Activated naive CD4-positive, alpha-beta T cell treated with anti-CD3 and anti-CD28 coated beads for 36 hours (primary cell): ENCODE measurements at regions of chr17 and their contacts with region 1.

Region 1: DNA sequence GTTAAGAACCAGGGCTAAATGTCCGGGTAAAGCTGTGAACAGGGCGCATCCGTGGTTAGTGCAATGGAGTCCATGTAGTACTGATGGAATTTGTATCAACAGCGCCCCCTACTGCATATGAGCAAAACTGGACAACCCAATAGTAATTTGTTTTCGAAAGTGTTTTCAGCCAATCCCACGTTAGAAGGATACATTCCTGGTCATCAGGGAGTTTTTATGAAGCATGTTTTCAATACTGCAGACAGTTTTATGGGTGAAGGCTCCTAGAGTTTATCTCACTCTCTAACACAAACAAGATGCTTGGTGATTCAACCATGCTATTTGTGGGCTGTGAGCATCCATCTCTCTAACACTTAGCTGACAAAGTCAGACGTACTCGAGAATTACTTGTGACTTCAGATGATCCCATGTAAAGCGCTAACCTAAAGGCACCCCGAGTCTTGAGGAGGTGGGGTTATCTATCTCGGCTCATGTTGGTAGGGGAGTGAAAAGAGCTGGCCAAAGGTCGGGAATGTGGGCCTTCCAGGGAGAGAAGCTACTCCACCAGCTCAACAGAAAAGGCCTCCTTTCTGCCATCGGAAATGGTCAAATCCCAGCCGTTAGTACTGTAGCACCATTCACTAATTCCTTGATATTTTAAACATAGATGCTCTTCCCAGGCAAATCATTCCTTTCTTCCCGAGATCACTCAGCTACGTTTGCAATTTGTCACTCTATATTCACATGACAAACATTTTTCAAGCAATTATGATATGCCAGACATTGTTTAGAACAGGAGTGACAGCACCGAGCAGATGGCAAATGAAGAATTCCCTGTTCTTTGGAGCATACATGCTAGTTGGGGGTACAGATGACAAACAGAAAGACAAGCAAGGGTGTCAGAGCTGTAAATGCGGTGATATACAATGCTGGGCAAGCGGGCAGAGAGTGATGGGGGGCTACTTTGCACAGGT is 46.9 kb upstream of the HNF1B start:
- DNase-seq: peak; percentile 78
- H3K4me3 Mint-ChIP-seq: no peak overlapping the region
- H3K27ac Mint-ChIP-seq: no peak overlapping the region
- H3K4me1 Mint-ChIP-seq: no peaks in the 10 kb centered on the region
- H3K27me3 Mint-ChIP-seq: peaks cover 14% of the 10 kb centered on the region

Region 2: DNA sequence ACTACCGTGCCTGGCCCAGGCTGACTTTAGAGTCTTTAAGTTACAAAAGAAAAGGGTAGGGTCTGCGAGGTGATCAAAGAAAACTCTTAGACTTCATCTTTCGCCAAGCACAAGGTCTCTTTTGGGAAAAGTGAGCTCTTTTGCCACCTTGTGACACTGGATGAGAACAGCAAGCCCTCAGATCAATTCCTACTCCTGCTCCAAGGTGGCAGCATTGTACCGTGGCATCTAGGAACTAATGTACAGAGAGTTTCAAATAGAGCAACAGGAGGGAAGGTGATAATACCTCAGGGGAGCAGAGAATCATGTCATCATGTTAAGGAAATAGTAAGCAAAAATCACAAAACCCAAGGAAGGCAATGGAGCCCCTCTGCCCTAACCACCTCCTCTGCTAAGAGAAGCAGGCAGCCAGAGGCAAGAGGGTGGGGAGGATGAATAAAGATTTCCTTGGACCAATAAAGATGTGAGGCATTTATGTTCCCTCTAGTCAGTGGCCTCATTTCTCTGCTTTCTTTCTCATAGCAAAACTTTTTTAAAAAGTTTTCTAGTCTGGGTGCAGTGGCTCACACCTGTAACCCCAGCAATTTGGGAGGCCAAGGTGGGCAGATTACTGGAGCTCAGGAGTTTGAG is 418.1 kb before region 1 on chr17:
- CTCF ChIA-PET with region 1: no interaction called
- intact Hi-C with region 1: loop called (anchors 1 kb)
- DNase-seq: peak; percentile 89
- H3K4me3 Mint-ChIP-seq: no peak overlapping the region
- H3K27ac Mint-ChIP-seq: no peak overlapping the region
- H3K4me1 Mint-ChIP-seq: peaks cover 7% of the 10 kb centered on the region
- H3K27me3 Mint-ChIP-seq: no peaks in the 10 kb centered on the region

Region 3: GRCh38 chr17:37527249-37527851 is 264.4 kb before region 1 on chr17:
- CTCF ChIA-PET with region 1: interaction called, 14 read pairs
- intact Hi-C with region 1: loop called (anchors 1 kb)
- DNase-seq: peak; percentile 44
- H3K4me3 Mint-ChIP-seq: no peak overlapping the region
- H3K27ac Mint-ChIP-seq: no peak overlapping the region
- H3K4me1 Mint-ChIP-seq: peaks cover 7% of the 10 kb centered on the region
- H3K27me3 Mint-ChIP-seq: no peaks in the 10 kb centered on the region

Region 4: GRCh38 chr17:37576281-37576680 is 215.4 kb before region 1 on chr17:
- CTCF ChIA-PET with region 1: no interaction called
- intact Hi-C with region 1: no loop called
- DNase-seq: no peak
- H3K4me3 Mint-ChIP-seq: no peak overlapping the region
- H3K27ac Mint-ChIP-seq: no peak overlapping the region
- H3K4me1 Mint-ChIP-seq: no peaks in the 10 kb centered on the region
- H3K27me3 Mint-ChIP-seq: no peaks in the 10 kb centered on the region

Region 5: DNA sequence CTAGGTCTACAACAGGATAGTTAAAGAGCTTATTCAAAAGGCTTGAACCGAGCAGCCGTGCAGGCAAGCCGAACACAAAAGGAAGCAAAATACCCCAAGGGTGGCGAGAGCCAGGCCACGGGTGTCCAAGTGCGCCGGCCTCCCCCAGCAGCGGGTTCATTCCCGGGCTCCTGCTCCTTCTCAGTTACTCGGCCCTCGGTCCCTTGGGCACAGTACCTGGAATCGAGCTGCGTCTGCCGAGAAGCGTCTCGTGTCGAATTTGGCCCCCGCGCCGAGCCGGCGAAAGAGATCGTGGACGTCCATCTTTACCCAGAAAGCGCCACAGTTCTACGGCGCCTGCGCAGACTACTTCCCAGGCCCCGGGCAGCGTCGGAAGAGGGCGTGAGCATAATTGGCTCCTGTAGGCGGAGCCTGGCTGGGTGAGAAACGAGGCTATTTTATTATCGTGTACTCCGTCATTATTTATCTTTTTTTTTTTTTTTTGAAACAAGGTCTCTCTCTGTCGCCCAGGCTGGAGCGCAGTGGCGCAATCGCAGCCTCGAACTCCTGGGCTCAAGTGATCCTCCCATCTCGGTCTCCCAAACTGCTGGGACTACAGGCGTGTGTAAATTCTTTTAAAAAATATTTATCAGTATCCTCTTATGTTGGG is 148.5 kb before region 1 on chr17 and contains the start of gene DDX52:
- CTCF ChIA-PET with region 1: no interaction called
- intact Hi-C with region 1: loop called (anchors 1 kb)
- DNase-seq: peak; percentile 93
- H3K4me3 Mint-ChIP-seq: peak within 1 kb of the TSS; percentile 87
- H3K27ac Mint-ChIP-seq: peak within 1 kb of the TSS; percentile 81
- H3K4me1 Mint-ChIP-seq: peaks cover 23% of the 10 kb centered on the region
- H3K27me3 Mint-ChIP-seq: peaks cover 13% of the 10 kb centered on the region
- total RNA-seq, gene DDX52: 18.5 to 20.2 TPM

Region 6: DNA sequence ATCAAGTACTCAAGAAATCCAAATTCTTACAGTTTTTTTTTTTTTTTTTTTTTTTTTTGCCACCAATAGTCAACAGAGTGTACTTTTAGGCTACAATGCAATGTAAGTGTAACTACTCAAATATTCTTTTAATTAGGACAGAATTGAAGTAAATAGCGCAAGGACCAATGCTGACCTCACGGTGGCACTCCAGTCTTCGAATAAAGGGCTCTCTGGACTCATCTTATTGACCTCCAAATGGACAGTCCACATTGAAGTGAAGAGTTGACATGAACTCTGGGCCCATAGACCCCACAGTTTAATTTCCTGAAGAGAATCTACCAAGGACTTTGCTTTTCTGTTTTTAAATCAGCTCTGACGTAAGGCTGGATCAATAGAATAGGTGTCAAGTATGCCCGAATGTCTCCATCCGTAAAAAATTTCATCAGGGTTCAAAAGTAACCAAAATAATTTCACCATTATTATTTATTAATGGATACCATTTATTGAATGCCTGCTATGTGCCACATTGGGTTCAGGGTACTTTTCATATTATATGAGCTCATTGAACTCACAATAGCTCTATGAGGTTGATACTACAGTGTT is 141.2 kb before region 1 on chr17:
- CTCF ChIA-PET with region 1: interaction called, 5 read pairs
- intact Hi-C with region 1: loop called (anchors 2 kb)
- DNase-seq: peak; percentile 12
- H3K4me3 Mint-ChIP-seq: no peak overlapping the region
- H3K27ac Mint-ChIP-seq: no peak overlapping the region
- H3K4me1 Mint-ChIP-seq: no peaks in the 10 kb centered on the region
- H3K27me3 Mint-ChIP-seq: peaks cover 26% of the 10 kb centered on the region

Region 7: DNA sequence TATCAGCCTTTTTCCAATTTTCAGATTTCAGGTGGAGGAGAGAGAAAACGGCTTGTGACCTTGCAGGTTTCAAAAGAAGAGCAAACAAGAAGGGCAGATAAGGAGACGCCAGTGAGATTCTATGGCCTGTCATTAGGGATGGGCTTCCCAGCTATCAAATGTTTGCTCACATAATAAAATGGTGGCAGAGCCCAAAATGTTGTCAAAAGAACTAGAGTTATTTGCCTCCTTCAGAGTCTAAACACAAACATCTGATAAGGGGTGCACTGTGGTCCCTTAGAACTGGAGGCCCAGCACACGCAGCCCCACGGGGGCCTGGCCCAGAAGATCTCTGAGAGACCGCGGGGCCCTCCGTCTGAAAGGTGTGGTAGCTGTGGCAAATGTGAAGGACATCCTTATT is 102.4 kb before region 1 on chr17:
- CTCF ChIA-PET with region 1: no interaction called
- intact Hi-C with region 1: no loop called
- DNase-seq: no peak
- H3K4me3 Mint-ChIP-seq: no peak overlapping the region
- H3K27ac Mint-ChIP-seq: no peak overlapping the region
- H3K4me1 Mint-ChIP-seq: no peaks in the 10 kb centered on the region
- H3K27me3 Mint-ChIP-seq: no peaks in the 10 kb centered on the region

Region 8: GRCh38 chr17:37701496-37701898 is 90.2 kb before region 1 on chr17:
- CTCF ChIA-PET with region 1: interaction called, 18 read pairs
- intact Hi-C with region 1: loop called (anchors 1 kb)
- DNase-seq: peak; percentile 70
- H3K4me3 Mint-ChIP-seq: no peak overlapping the region
- H3K27ac Mint-ChIP-seq: no peak overlapping the region
- H3K4me1 Mint-ChIP-seq: peaks cover 20% of the 10 kb centered on the region
- H3K27me3 Mint-ChIP-seq: peaks cover 14% of the 10 kb centered on the region

Region 9: GRCh38 chr17:37816950-37817349 is 25.2 kb after region 1 on chr17:
- CTCF ChIA-PET with region 1: interaction called, 10 read pairs
- intact Hi-C with region 1: no loop called
- DNase-seq: no peak
- H3K4me3 Mint-ChIP-seq: no peak overlapping the region
- H3K27ac Mint-ChIP-seq: no peak overlapping the region
- H3K4me1 Mint-ChIP-seq: no peaks in the 10 kb centered on the region
- H3K27me3 Mint-ChIP-seq: peaks cover 14% of the 10 kb centered on the region